PC-3 (cell line): ENCODE measurements at regions of chr3 and their contacts with region 1.

Region 1: DNA sequence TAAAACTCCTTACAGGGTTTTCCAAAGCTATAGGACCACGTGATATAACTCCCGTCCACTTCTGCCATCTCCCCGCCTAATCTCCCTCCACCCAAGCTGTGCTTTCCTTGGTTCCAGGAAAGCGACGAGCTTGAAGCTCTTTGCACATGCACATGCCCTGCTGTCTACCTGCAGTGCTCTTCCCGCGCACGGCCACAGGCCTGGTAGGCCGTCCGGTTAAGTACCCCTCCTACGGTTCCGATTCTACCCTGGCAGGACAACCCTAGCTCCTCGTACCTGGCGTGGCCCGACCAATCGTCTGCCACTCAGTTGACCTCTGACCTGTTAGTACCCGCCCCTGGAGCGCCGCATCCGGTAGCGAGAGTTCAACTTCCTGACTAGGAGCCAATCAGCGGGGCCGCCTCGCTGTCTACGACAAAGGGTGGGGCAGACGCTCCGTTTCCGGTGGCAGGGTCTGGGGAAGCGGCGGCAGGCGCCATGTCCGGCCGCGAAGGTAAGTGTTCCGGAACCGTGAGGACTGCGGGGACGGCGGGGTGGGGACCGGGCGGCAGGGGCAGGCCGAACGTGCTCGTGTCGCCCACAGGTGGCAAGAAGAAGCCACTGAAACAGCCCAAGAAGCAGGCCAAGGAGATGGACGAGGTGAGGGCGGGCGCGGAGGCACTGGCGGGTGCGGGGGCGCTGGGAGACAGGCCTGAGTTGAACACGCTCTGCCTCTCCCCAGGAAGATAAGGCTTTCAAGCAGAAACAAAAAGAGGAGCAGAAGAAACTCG is at the starts of genes CCDC51 and TMA7:
- DNase-seq: peak; percentile 99
- ATAC-seq: peak; percentile 91
- H3K4me3 ChIP-seq: peak within 1 kb of the TSS; percentile 99
- H3K27ac ChIP-seq: peak within 1 kb of the TSS; percentile 56
- H3K4me1 ChIP-seq: peaks cover 17% of the 10 kb centered on the region
- H3K27me3 ChIP-seq: no peaks in the 10 kb centered on the region
- CTCF ChIP-seq: no peak
- total RNA-seq, gene CCDC51: 27.8 and 30.9 TPM in 2 replicates
- total RNA-seq, gene TMA7: 517 and 618 TPM in 2 replicates

Region 2: GRCh38 chr3:48232734-48233133 is 207.3 kb before region 1 on chr3:
- CTCF ChIA-PET with region 1: interaction called, 9 read pairs
- POLR2A ChIA-PET with region 1: interaction called, 3 read pairs
- intact Hi-C with region 1: loop called (anchors 1 kb)
- DNase-seq: peak; percentile 84
- ATAC-seq: peak; percentile 100
- H3K4me3 ChIP-seq: peak overlapping the region; percentile 36; the same call in 1 of the 2 replicates
- H3K27ac ChIP-seq: no peak overlapping the region
- H3K4me1 ChIP-seq: peaks cover 4% of the 10 kb centered on the region; the same call in 1 of the 2 replicates
- H3K27me3 ChIP-seq: no peaks in the 10 kb centered on the region
- CTCF ChIP-seq: peak; percentile 93

Region 3: DNA sequence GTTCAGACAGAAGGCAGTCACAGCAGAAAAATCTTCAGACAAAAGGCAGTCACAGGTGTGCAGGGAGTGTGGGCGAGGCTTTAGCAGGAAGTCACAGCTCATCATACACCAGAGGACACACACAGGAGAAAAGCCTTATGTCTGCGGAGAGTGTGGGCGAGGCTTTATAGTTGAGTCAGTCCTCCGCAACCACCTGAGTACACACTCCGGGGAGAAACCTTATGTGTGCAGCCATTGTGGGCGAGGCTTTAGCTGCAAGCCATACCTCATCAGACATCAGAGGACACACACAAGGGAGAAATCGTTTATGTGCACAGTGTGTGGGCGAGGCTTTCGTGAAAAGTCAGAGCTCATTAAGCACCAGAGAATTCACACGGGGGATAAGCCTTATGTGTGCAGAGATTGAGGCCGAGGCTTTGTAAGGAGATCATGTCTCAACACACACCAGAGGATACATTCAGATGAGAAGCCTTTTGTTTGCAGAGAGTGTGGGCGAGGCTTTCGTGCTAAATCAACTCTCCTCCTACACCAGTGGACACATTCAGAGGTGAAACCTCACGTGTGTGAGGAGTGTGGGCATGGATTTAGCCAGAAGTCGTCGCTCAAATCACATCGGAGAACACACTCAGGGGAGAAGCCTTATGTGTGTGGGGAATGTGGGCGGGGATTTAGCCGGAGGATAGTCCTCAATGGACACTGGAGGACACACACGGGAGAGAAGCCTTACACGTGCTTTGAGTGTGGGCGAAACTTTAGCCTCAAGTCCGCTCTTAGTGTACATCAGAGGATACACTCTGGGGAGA is 171.4 kb before region 1 on chr3:
- CTCF ChIA-PET with region 1: interaction called, 69 read pairs
- POLR2A ChIA-PET with region 1: interaction called, 3 read pairs
- intact Hi-C with region 1: loop called (anchors 1 kb)
- DNase-seq: peak; percentile 97
- ATAC-seq: peak; percentile 98
- H3K4me3 ChIP-seq: peak overlapping the region; percentile 47
- H3K27ac ChIP-seq: peak overlapping the region; percentile 93
- H3K4me1 ChIP-seq: peaks cover 28% of the 10 kb centered on the region
- H3K27me3 ChIP-seq: no peaks in the 10 kb centered on the region
- CTCF ChIP-seq: no peak

Region 4: GRCh38 chr3:48356420-48356819 is 83.6 kb before region 1 on chr3:
- CTCF ChIA-PET with region 1: no interaction called
- POLR2A ChIA-PET with region 1: no interaction called
- intact Hi-C with region 1: no loop called
- DNase-seq: peak; percentile 8
- ATAC-seq: no peak
- H3K4me3 ChIP-seq: no peak overlapping the region
- H3K27ac ChIP-seq: no peak overlapping the region
- H3K4me1 ChIP-seq: no peaks in the 10 kb centered on the region
- H3K27me3 ChIP-seq: peaks cover 15% of the 10 kb centered on the region; the same call in 1 of the 2 replicates
- CTCF ChIP-seq: no peak

Region 5: GRCh38 chr3:48400824-48401433 is 39.1 kb before region 1 on chr3:
- CTCF ChIA-PET with region 1: interaction called, 222 read pairs
- POLR2A ChIA-PET with region 1: interaction called, 4 read pairs
- intact Hi-C with region 1: loop called (anchors 1 kb)
- DNase-seq: peak; percentile 86
- ATAC-seq: peak; percentile 66
- H3K4me3 ChIP-seq: no peak overlapping the region
- H3K27ac ChIP-seq: no peak overlapping the region
- H3K4me1 ChIP-seq: peaks cover 11% of the 10 kb centered on the region; the same call in 1 of the 2 replicates
- H3K27me3 ChIP-seq: no peaks in the 10 kb centered on the region
- CTCF ChIP-seq: peak; percentile 82

Region 6: GRCh38 chr3:48556793-48557626 is 117.0 kb after region 1 on chr3 and contains the start of gene PFKFB4:
- CTCF ChIA-PET with region 1: interaction called, 19 read pairs
- POLR2A ChIA-PET with region 1: interaction called, 11 read pairs
- intact Hi-C with region 1: loop called (anchors 5 kb)
- DNase-seq: peak; percentile 99
- ATAC-seq: peak; percentile 87
- H3K4me3 ChIP-seq: peak within 1 kb of the TSS; percentile 86
- H3K27ac ChIP-seq: peak within 1 kb of the TSS; percentile 9; the same call in 1 of the 2 replicates
- H3K4me1 ChIP-seq: peaks cover 31% of the 10 kb centered on the region
- H3K27me3 ChIP-seq: no peaks in the 10 kb centered on the region
- CTCF ChIP-seq: no peak
- total RNA-seq, gene PFKFB4: 33.5 and 35.2 TPM in 2 replicates